Colonic mucosa (tissue), 4 donors: ENCODE measurements at regions of chr6 and their contacts with region 1.

Region 1: GRCh38 chr6:41602864-41603608 is 35.2 kb upstream of the MDFI start:
- DNase-seq: peak; percentile 88
- H3K4me3 ChIP-seq: no peak overlapping the region
- H3K27ac ChIP-seq: no peak overlapping the region
- H3K4me1 ChIP-seq: peaks cover 7% of the 10 kb centered on the region
- H3K27me3 ChIP-seq: no peaks in the 10 kb centered on the region
- CTCF ChIP-seq: peak; percentile 75

Region 2: DNA sequence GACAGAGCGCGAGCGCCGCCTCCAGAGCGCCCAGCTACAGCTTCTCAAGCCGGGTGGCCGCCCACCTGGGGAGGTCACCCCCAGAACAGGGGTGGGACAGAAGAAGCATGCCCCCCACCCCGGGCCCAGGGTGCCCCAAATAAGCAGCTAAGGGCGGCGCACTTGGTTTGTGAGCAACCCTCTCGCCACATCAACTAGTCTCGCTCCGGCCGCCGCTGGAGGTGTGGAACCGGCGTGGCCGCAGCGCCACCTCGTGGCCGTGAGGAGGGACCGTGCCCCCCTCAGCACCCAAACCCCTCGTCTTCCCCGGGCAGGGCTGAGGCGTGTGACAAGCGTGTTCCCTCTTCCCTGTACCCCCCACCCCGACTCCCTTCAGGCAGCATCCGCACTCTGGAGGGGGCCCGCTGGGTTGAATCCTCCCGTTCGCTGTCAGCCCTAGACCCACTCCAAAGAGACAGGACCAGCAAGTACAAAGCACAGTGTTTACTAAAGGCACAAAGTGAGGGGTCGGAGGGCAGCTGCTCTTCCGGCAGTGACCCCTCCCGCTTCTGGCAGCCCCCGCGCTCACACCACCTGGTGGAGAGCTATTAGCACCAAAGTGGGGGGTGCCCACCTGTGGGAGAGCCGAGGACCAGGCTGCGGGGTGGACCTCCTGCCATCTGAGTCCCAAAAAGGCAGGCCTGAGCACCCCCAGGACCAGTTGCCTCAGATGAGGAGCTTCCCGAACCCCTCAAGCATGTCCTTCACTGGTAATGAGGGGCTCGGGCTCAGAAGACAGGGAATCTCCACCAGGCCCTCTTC is 80.7 kb after region 1 on chr6:
- intact Hi-C with region 1: loop called (anchors 1 kb)
- DNase-seq: peak; percentile 78
- H3K4me3 ChIP-seq: peak overlapping the region; percentile 39
- H3K27ac ChIP-seq: no peak overlapping the region
- H3K4me1 ChIP-seq: peaks cover 5% of the 10 kb centered on the region
- H3K27me3 ChIP-seq: no peaks in the 10 kb centered on the region
- CTCF ChIP-seq: peak; percentile 86